Panc1 (cell line): ENCODE measurements at regions of chrX and their contacts with region 1.

Region 1: DNA sequence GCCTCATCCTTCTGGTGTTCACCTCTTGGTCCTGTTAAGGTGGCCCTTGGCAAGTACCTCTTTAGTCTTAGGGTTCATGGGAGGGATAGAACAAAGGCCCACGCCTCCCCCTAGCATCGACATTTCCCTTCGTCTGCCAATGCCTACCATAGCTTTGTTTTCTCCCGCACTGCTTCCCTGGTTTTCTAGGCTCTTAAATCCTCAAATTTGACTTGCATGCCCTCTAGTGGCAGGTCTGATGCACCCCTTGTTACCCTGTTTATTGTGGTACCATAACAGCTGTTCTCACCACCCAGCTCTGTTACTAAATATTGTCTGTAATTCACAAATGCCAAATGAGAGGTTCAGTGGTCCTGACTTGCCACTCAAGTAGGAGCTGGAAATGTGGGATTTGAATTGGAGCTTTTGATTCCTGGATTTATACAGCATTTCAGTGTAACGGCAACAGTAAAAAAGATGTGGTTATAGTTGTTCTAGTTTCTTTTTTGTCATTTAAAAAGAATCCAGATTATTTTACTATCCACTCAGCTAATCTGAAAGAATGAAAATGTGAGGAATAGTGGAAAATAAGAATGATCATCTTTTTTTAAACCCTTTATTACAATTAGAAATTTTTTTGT is 100.1 kb downstream of the REPS2 start:
- DNase-seq: peak; percentile 33
- ATAC-seq: peak; percentile 80
- H3K4me3 ChIP-seq: no peak overlapping the region
- H3K27ac ChIP-seq: no peak overlapping the region
- H3K4me1 ChIP-seq: no peaks in the 10 kb centered on the region
- H3K27me3 ChIP-seq: no peaks in the 10 kb centered on the region
- CTCF ChIP-seq: peak; percentile 79

Region 2: DNA sequence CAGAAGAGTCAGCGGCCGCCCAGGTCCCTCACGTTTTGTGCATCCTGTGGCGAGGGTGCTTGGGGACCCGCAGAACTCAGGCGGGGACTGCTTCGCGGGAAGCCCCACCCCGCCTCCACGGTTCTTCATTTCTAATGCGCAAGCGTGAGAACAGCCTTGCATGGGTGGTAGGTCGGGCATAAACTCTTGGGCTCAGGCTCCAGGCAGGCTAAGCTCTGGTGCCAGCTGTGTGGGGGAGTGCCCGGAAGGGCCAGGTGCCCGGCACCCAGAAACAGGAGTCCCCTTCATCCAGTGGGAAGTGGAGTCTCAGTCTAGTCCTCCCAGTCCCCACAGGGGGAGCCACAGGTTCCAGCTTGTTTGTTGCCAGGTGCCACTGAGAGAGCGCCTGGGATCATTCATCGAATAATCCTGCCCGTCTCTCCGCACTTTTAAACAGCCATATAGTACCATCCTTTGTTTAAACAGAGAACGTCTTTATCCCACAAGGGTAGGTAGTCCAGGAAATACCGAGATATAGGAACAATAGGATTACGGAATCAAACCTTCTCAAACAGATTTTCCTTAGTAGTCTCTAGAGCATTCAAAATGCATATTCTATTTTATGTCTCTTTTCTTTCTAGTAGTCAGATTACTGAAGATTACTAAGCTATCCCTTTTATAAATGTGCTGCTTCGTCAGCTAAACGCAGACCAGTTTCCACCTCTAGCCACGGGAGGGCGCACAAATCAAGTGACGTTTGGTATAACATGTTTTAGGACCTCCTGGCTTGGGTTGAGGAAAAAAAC is 163.7 kb before region 1 on chrX:
- CTCF ChIA-PET with region 1: interaction called, 23 read pairs
- POLR2A ChIA-PET with region 1: no interaction called
- in situ Hi-C with region 1: no loop called
- intact Hi-C with region 1: loop called (anchors 2 kb)
- DNase-seq: no peak
- ATAC-seq: peak; percentile 89
- H3K4me3 ChIP-seq: peak overlapping the region; percentile 39 to 56
- H3K27ac ChIP-seq: no peak overlapping the region
- H3K4me1 ChIP-seq: no peaks in the 10 kb centered on the region
- H3K27me3 ChIP-seq: no peaks in the 10 kb centered on the region
- CTCF ChIP-seq: peak; percentile 80

Region 3: GRCh38 chrX:17021851-17022604 is 24.6 kb before region 1 on chrX:
- CTCF ChIA-PET with region 1: no interaction called
- POLR2A ChIA-PET with region 1: no interaction called
- in situ Hi-C with region 1: no loop called
- intact Hi-C with region 1: no loop called
- DNase-seq: no peak
- ATAC-seq: no peak
- H3K4me3 ChIP-seq: no peak overlapping the region
- H3K27ac ChIP-seq: no peak overlapping the region
- H3K4me1 ChIP-seq: no peaks in the 10 kb centered on the region
- H3K27me3 ChIP-seq: no peaks in the 10 kb centered on the region
- CTCF ChIP-seq: no peak